ENCODE measurements at regions of chr1 and their contacts with region 1.

Region 1: DNA sequence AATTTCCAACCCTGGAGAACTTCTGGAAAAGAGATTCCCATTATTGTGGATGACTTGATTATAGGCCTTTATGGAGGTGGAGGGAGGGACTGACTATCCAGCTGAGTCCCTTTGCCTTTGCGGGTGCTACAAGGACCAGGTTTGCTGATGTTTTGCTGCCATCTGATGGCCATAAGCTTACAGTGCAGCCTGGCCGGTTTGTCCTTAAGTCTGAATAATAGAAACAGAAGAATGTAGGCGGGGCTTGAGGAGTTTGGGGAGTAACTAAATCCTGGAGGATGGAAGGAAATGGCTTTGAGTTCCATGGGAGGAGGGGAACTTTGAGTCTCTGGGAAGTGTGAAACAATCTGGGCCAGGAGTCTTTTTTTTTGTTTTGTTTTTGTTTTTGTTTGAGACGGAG is 55.7 kb upstream of the CD1D start:
- DNase-seq: peak; percentile 94

Region 2: GRCh38 chr1:157575744-157576143 is 549.3 kb before region 1 on chr1:
- intact Hi-C with region 1: loop called in 1 of 2 experiments (anchors 10 kb)
- DNase-seq: no peak

Region 3: DNA sequence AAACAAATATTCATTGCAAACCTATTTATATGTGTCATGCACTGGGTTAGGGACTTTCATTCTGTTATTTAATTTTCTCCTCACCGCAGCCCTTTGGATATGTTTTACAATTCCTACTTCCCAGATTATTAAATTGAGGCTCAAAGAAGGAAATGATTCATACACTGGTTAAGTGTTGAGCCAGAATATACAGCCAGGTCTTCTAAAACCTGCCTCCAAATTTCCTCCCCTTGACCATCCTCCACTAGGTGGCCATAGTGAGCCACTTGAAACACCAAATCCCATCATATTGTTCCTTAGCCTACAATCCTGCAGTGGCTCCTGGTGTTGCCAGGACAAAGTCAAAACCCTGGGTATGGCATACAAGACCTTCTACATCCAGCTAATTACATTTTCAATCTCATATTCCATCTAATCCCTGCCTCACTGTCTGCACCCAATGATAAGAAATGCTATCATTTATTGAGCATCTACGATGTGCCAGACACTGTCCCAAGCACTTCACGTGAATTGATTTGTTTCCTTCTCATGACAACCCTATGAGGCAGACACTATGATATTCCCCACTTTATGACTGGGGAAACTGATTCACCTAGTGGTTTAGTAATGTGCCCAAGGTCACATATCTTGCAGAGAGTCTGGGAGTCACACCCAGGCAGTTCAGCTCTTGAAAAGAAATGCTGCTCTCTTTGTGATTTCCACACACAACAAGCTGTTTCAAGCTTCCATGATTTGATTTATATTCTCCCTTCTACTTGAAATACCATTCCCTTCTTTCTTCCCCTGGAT is 155.1 kb before region 1 on chr1:
- intact Hi-C with region 1: loop called in 1 of 2 experiments (anchors 5 kb)
- DNase-seq: no peak

Measured in posterior vena cava (tissue), 2 donors.